ENCODE measurements at regions of chr20 and their contacts with region 1.

Region 1: DNA sequence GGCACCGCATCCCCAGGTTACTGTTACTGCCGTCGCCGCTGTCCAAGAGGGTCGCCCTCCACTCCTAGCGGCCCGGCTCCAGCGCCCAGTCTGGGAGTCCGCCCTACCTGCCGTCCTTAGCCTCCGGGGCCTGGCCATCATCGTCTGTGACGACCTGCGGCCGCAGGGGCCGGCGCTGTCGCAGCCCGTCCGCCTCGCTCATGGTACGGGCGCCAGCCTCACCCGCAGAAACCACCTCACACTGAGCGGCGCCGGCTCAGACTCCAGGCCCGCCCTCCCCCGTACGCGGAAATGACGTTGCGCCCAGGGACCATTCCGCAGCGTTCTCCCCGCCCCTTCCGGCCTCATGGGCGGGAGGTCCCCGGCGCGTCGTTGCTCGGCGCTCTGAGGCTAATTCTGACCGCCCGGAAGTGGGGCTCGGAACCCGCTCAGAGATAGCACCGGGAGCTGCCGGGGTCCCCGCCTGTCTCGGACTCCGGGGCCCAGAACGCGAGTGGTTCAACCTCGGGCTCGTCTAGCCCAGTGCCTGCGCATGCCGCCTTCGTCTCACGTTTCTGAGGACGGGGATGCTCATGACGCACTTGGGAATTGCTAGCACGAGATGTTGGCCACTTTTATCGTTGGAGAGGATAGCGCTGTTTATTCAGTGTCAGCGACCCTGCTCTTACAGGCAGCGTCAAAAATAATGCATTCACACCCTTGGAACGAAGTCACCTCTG is at the start of gene APMAP:
- DNase-seq: peak; percentile 91
- H3K4me3 ChIP-seq: peak within 1 kb of the TSS; percentile 85 to 98 (median 90)
- H3K27ac ChIP-seq: peak within 1 kb of the TSS; percentile 63
- H3K4me1 ChIP-seq: peaks cover 27% of the 10 kb centered on the region
- H3K27me3 ChIP-seq: no peaks in the 10 kb centered on the region
- CTCF ChIP-seq: no peak
- total RNA-seq, gene APMAP: 74.6 to 104 TPM

Region 2: GRCh38 chr20:24366336-24367004 is 626.2 kb before region 1 on chr20:
- CTCF ChIA-PET with region 1: no interaction called
- dilution Hi-C with region 1: no loop called
- in situ Hi-C with region 1: no loop called
- intact Hi-C with region 1: no loop called
- DNase-seq: no peak
- H3K4me3 ChIP-seq: no peak overlapping the region
- H3K27ac ChIP-seq: no peak overlapping the region
- H3K4me1 ChIP-seq: no peaks in the 10 kb centered on the region
- H3K27me3 ChIP-seq: no peaks in the 10 kb centered on the region
- CTCF ChIP-seq: no peak

Region 3: GRCh38 chr20:24934101-24934661 is 58.5 kb before region 1 on chr20:
- CTCF ChIA-PET with region 1: no interaction called
- dilution Hi-C with region 1: no loop called
- in situ Hi-C with region 1: no loop called
- intact Hi-C with region 1: loop called (anchors 1 kb)
- DNase-seq: no peak
- H3K4me3 ChIP-seq: no peak overlapping the region
- H3K27ac ChIP-seq: no peak overlapping the region
- H3K4me1 ChIP-seq: peaks cover 26% of the 10 kb centered on the region
- H3K27me3 ChIP-seq: no peaks in the 10 kb centered on the region
- CTCF ChIP-seq: no peak

Region 4: GRCh38 chr20:24955045-24955444 is 37.6 kb before region 1 on chr20:
- CTCF ChIA-PET with region 1: no interaction called
- dilution Hi-C with region 1: no loop called
- in situ Hi-C with region 1: no loop called
- intact Hi-C with region 1: no loop called
- DNase-seq: no peak
- H3K4me3 ChIP-seq: no peak overlapping the region
- H3K27ac ChIP-seq: no peak overlapping the region
- H3K4me1 ChIP-seq: no peaks in the 10 kb centered on the region
- H3K27me3 ChIP-seq: no peaks in the 10 kb centered on the region
- CTCF ChIP-seq: no peak

Region 5: GRCh38 chr20:25178563-25179438 is 186.2 kb after region 1 on chr20:
- CTCF ChIA-PET with region 1: no interaction called
- dilution Hi-C with region 1: no loop called
- in situ Hi-C with region 1: loop called in 1 of 2 experiments (anchors 10 kb)
- intact Hi-C with region 1: loop called (anchors 1 kb)
- DNase-seq: peak; percentile 97
- H3K4me3 ChIP-seq: no peak overlapping the region
- H3K27ac ChIP-seq: peak overlapping the region; percentile 12
- H3K4me1 ChIP-seq: peaks cover 26% of the 10 kb centered on the region
- H3K27me3 ChIP-seq: no peaks in the 10 kb centered on the region
- CTCF ChIP-seq: peak; percentile 93 to 97

Region 6: DNA sequence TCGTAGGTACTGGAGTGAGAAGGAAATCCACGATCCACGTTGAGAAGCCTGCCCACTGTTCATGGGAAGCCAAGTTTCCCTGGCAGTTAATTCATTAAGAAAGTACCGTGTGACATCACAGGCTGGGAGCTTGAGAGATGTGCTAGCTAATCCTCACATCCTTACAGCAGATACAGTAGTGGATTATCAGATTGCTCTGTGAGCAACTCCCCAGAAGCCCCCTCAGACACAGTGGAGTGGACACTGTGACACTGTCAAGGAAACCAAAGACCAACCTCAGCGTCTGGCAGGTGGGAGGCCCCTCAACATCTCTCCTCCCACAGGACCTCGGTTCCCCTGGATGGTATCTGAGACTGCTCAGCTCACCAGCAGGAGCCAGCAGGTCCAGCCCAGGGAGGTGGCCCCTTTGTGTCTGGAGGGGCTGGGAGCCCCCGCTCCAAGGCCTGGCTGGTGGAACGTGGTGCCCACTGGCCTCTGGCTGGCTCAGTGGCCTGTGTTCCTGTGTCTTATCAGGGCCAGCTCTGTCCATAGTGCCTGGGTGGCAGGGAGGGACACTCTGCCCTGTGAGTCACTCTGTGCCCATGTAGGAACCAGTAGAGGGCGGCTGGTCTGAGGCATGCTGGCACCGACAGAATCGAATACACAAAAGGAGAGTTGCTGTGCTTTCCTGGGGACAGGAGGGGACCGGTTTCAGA is 262.5 kb after region 1 on chr20:
- CTCF ChIA-PET with region 1: no interaction called
- dilution Hi-C with region 1: no loop called
- in situ Hi-C with region 1: loop called in 1 of 2 experiments (anchors 10 kb)
- intact Hi-C with region 1: no loop called
- DNase-seq: peak; percentile 35
- H3K4me3 ChIP-seq: no peak overlapping the region
- H3K27ac ChIP-seq: no peak overlapping the region
- H3K4me1 ChIP-seq: peaks cover 46% of the 10 kb centered on the region
- H3K27me3 ChIP-seq: no peaks in the 10 kb centered on the region
- CTCF ChIP-seq: peak in 1 of 2 donors; percentile 23

Region 7: DNA sequence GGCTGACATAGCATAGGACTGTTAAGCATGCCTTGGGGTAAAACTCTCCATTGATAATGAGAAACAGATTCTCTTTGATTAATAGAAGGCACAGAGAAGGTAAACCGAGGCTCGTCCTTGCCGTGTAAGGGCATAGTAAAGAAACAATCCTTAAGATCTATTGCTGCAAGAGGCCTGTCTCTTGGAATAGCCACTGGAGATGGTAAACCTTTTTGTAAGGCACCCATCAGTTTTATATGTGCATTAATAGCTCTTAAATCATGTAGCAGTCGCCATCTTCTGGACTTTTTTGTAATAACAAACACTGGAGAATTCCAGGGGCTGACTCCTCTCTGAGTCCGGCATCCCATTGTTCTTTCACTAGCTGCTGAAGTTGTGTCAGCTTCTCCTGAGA is 406.4 kb after region 1 on chr20:
- CTCF ChIA-PET with region 1: interaction called, 5 read pairs
- dilution Hi-C with region 1: no loop called
- in situ Hi-C with region 1: loop called (anchors 10 kb)
- intact Hi-C with region 1: loop called (anchors 1 kb)
- DNase-seq: peak; percentile 65
- H3K4me3 ChIP-seq: no peak overlapping the region
- H3K27ac ChIP-seq: no peak overlapping the region
- H3K4me1 ChIP-seq: no peaks in the 10 kb centered on the region
- H3K27me3 ChIP-seq: no peaks in the 10 kb centered on the region
- CTCF ChIP-seq: peak; percentile 54 to 60

Region 8: DNA sequence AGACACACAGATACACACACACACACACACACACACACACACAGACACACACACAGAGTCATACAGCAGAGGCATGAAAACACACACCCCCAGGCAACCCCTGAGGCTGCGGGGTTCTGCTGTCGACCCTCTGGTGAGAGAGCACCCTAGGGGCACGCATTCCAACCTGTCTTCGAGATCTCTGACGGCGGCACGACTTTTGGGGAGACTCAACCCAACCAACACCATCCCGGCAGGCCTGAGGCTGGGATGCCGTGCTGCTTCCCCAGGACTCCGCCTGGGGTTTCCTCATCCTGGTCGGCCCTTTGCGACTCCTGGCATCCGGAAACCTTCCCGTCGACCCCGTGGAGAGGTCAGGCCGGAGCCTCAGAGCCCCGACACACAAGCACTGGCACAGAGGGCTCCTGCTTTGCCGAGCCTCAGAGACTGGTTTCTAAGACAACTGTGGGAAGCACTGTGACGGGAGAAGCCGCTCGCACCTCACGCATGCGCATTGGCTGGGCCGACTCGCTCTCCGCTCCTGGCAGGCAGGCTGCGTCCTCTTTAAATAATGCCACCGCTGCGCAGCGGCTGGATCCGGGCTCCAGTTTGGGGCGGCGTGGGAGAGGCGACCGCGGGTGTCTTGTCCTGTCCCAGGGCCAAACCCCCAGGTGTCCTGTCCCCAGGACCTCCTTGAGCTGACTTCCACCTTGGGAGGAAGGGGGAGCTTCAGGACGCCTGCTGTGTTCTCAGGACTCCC is 872.9 kb after region 1 on chr20:
- CTCF ChIA-PET with region 1: no interaction called
- dilution Hi-C with region 1: no loop called
- in situ Hi-C with region 1: loop called in 1 of 2 experiments (anchors 25 kb)
- intact Hi-C with region 1: no loop called
- DNase-seq: peak; percentile 65
- H3K4me3 ChIP-seq: peak overlapping the region; percentile 24 to 45 (median 40)
- H3K27ac ChIP-seq: no peak overlapping the region
- H3K4me1 ChIP-seq: peaks cover 20% of the 10 kb centered on the region
- H3K27me3 ChIP-seq: no peaks in the 10 kb centered on the region
- CTCF ChIP-seq: no peak